ENCODE measurements at regions of chr11 and their contacts with region 1.

Region 1: DNA sequence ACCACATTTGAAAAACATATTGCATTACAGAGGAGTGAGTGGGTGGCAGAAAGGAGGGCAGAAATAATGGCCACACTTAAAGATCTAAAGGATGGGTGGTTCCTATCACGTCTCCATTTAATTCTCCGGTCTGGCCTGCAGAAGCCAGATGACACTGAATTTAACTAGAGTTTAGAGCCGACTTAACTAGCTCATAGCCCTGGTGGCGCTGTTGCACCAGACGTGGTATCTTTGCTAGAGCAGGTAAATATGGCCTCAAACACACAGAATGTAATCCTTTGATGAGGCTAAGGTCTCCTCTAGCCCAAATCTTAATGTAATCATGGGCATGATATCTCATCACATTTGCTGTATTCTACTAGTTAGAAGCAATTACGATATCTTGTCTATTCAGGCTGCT is 51.5 kb upstream of the GAL start:
- DNase-seq: peak; percentile 80
- ATAC-seq: peak; percentile 100
- H3K4me3 Mint-ChIP-seq: no peak overlapping the region
- H3K27ac Mint-ChIP-seq: no peak overlapping the region
- H3K4me1 Mint-ChIP-seq: peaks cover 38% of the 10 kb centered on the region
- H3K27me3 Mint-ChIP-seq: no peaks in the 10 kb centered on the region
- CTCF ChIP-seq: peak; percentile 34; the same call in 1 of the 2 replicates

Region 2: GRCh38 chr11:68610452-68611116 is 22.2 kb before region 1 on chr11:
- CTCF ChIA-PET with region 1: interaction called, 11 read pairs
- POLR2A ChIA-PET with region 1: interaction called, 3 read pairs
- DNase-seq: no peak
- ATAC-seq: peak; percentile 46; the same call in 1 of the 2 replicates
- H3K4me3 Mint-ChIP-seq: no peak overlapping the region
- H3K27ac Mint-ChIP-seq: 0 out of 2 replicates have a peak overlapping the region, but pooled peaks have one; percentile 44
- H3K4me1 Mint-ChIP-seq: no peaks in the 10 kb centered on the region
- H3K27me3 Mint-ChIP-seq: no peaks in the 10 kb centered on the region
- CTCF ChIP-seq: no peak

Region 3: DNA sequence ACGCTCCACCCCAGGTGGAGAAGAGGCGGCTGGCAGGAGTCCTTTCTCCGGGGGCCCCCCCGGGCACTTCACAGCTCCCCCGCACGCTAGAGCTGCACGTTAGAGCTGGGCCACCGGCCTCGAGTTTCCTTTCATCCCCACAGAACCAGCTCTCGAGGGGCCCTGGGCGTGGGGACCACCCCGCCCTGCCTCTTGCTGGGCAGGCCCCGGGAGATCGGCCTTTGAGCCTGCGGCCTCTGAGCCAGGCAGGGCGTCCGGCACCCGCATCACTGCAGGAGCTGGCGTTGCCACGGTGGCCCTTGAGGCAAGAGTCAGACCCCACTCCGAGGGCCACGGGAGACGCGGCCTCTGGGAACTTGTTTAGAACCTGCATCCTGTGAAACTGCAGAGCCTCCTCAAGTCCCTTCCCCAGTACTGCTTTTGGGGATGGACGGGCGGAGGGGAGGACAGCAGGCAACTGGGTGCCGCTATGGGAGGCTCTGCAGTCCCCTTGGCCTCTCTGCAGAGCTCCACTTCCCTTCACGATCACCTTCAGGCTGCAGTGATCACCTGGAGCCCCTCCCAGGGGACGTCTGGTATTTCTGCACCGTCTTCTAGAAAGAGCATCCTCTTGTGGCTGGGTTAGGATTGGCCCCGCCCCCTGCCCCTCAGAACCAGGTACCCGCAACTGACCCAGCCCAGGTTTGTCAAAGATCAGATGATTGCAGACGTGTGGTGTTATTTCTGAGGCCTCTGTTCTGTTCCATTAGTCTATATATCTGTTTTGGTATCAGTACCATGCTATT is 37.6 kb after region 1 on chr11:
- CTCF ChIA-PET with region 1: interaction called, 10 read pairs
- POLR2A ChIA-PET with region 1: no interaction called
- DNase-seq: peak; percentile 61
- ATAC-seq: peak; percentile 95
- H3K4me3 Mint-ChIP-seq: no peak overlapping the region
- H3K27ac Mint-ChIP-seq: no peak overlapping the region
- H3K4me1 Mint-ChIP-seq: peaks cover 12% of the 10 kb centered on the region
- H3K27me3 Mint-ChIP-seq: no peaks in the 10 kb centered on the region
- CTCF ChIP-seq: no peak

Measured in WTC11 (cell line).